Activated T-helper 1 cell treated with anti-CD3 and anti-CD28 coated beads, Interleukin-12 subunit alpha, Interleukin-12 subunit beta, Interleukin-2, Interleukin-4 antibody, amounts not matched to agents 30 ng/mL and 10 ng/mL and 1 ng/mL, durations not matched to agents 14 hours and 24 hours and 36 hours (primary cell): ENCODE measurements at regions of chr5 and their contacts with region 1.

Region 1: DNA sequence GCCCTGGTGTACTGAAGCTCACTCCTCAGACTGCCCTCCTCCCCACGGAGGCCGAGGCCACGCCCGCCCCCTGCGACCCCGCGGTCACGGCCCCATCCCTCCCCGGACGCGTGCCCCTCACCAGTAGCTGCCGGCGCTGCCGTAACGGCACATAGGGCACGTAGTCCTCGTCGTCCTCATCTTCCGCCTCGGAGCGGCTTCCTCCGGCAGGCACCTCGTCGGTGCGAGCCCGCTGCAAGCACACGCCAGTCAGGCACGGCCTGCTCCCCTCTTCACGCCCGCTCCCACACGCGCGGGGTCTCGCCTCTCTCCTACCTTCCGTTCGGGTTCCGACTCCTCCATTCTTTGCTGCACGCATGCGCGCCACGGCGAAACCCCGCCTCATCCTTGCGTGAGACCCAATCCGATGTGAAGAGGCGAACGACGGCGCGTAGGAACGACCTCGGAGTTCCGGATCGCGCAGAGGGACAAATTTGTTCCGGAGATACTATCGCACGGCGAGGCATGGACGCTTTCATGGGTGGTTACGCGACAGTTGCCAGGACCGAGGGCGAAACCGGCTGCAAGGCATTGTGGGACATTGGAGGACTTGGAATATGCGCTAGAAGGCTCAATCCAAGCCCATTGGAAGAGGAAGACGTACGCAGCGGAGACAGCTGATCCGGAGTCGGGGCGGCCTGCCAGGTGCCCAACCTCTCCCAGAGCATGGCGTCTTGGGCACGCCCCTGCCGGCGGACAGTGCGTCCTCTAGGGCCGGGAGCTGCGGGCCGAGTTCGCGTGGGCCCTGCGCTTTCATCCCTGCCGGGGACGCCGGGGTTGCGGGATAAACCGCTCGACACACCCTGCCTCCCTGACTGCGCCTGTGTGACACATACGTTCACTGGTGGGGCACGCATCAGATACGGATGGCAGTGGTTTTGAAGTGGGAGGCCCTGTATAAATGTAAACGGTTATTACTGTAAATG is at the start of gene DDX41:
- DNase-seq: peak; percentile 96
- H3K4me3 Mint-ChIP-seq: peak within 1 kb of the TSS; percentile 91
- H3K27ac Mint-ChIP-seq: peak within 1 kb of the TSS; percentile 88
- H3K4me1 Mint-ChIP-seq: peaks cover 46% of the 10 kb centered on the region
- H3K27me3 Mint-ChIP-seq: no peaks in the 10 kb centered on the region
- total RNA-seq, gene DDX41: 151 and 166 TPM in 2 replicates

Region 2: GRCh38 chr5:176361437-176362232 is 1155.3 kb before region 1 on chr5 and contains the start of gene KIAA1191:
- intact Hi-C with region 1: loop called (anchors 10 kb)
- DNase-seq: peak; percentile 93
- H3K4me3 Mint-ChIP-seq: peak within 1 kb of the TSS; percentile 97
- H3K27ac Mint-ChIP-seq: peak within 1 kb of the TSS; percentile 91
- H3K4me1 Mint-ChIP-seq: peaks cover 36% of the 10 kb centered on the region
- H3K27me3 Mint-ChIP-seq: no peaks in the 10 kb centered on the region
- total RNA-seq, gene KIAA1191: 60.9 and 63.4 TPM in 2 replicates

Region 3: DNA sequence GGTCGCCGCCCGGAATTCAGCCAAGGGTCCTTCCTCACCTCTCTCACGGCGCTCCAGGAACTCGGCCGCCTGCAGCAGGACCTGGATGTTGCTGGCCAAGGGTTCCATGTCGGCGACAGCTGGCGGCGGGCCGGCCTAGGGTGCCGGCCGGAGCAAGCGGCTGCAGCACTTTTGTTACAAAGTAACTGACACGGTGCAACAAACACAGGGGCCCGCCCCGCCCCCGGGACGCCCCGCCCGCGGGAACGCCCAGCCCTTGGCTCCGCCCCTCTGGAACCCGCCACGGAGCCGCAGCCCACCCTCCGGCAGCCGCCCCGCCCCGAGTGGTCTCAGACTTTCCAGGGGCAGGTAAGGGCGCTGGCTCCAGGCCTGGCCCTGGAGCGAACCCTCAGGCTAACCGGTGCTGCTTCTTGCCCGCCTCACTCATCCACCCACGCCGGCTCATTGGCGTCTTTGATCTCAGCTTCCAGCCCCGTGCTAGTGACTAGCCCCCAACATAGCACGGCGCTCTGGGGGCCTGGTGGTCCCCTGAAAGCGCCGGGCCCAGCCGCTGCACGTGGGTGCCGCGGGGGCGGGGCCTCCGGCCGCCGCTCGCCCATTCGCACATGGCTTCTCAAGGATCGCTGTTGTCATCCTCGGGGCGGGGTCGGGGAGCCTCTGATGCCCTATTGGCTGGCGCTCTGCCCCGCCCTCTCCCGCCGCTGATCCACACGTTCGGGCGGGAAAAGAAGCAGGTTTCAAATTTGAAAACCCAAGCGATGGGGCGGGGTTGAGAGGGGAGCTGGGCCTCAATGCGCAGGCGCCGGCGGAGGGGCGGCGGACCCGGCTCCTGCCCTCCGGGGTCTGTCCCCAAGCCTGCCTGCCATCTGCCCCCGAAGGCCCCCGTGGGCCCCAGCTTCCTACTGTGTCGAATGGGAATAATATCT is 204.9 kb before region 1 on chr5 and contains the start of gene MXD3:
- intact Hi-C with region 1: loop called (anchors 2 kb)
- DNase-seq: peak; percentile 96
- H3K4me3 Mint-ChIP-seq: peak within 1 kb of the TSS; percentile 89
- H3K27ac Mint-ChIP-seq: peak within 1 kb of the TSS; percentile 85
- H3K4me1 Mint-ChIP-seq: peaks cover 44% of the 10 kb centered on the region
- H3K27me3 Mint-ChIP-seq: no peaks in the 10 kb centered on the region
- total RNA-seq, gene MXD3: 9.6 and 11.8 TPM in 2 replicates

Region 4: DNA sequence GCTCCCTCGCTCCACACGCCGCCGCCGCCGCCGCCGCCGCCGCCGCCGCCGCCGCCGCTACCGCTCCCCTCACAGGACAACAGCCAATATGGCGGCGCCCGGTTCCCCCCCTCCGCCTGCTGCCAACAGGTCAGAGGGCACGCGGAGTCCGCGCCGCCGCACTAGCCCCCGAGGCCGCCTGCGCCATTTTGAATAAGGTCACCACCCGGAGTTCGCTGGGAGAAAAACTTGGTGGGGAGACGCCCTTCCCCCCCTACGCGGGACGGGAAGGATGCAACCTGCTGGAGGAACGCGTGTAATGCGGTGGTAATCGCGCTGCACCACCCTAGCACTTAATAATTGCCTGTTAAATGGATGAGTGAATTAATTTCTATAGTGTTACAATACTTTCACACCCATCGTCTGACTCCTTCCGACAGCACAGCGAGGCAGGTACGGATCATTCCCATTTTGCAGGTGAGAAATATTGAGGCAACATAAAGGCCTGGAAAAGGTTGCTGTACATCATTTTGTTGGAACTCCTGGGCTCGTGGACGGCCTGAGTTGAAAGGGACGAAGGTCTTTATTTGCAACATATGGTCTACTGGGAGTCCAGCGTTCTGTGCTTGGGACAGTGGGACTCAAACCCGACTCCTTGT is 37.7 kb after region 1 on chr5 and contains the start of gene FAM193B:
- intact Hi-C with region 1: loop called (anchors 1 kb)
- DNase-seq: peak; percentile 94
- H3K4me3 Mint-ChIP-seq: peak within 1 kb of the TSS; percentile 88
- H3K27ac Mint-ChIP-seq: peak within 1 kb of the TSS; percentile 85
- H3K4me1 Mint-ChIP-seq: peaks cover 37% of the 10 kb centered on the region
- H3K27me3 Mint-ChIP-seq: no peaks in the 10 kb centered on the region
- total RNA-seq, gene FAM193B: 70.9 and 79.4 TPM in 2 replicates